Dendritic cell treated with granulocyte-macrophage colony-stimulating factor and Interleukin-4, amounts not matched to agents 40 ng/mL and 50 ng/mL, for 4 days (primary cell): ENCODE measurements at regions of chrX and their contacts with region 1.

Region 1: DNA sequence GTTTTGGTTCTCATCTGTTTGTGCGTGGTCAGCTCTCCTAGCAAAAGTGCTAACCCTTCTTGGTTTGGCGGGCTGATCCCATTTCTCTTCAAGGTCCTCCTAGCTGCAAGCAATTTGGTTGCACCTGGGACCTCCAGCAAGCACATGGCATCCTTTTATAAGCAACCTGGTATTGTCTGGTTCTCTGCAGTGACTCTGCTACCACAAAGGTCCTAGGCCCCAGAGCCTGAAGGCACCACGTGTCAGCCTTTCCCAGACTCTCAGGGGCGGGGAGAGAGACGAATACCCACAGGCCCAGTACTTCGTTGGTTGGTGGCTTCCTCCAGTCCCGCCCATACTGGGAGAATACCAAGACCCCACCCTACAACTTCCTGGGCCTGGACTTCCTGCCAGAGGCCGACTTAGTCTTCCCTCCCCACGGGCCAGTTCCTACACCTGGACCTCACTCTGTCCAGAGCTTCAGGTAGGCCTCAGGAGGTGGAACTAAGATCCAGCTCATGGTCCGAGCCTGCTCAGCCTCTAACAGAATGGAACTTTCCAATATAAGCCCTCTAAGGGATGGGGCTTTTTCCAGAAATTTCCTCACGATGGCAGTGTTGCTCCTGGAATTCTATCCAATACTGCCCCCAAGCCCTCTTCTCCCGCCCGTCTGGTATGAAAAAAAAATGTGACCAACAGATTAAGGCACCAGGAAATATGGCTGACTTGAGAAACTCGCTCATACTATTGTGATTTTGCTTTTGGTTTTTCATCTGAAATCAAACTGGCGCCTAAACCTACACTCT is 192.5 kb upstream of the STK26 start:
- H3K4me3 Mint-ChIP-seq: peak overlapping the region; percentile 77
- H3K27ac Mint-ChIP-seq: peak overlapping the region; percentile 87
- H3K4me1 Mint-ChIP-seq: peaks cover 12% of the 10 kb centered on the region
- H3K27me3 Mint-ChIP-seq: no peaks in the 10 kb centered on the region

Region 2: GRCh38 chrX:131874300-131874699 is 43.7 kb after region 1 on chrX:
- intact Hi-C with region 1: no loop called
- H3K4me3 Mint-ChIP-seq: no peak overlapping the region
- H3K27ac Mint-ChIP-seq: no peak overlapping the region
- H3K4me1 Mint-ChIP-seq: no peaks in the 10 kb centered on the region
- H3K27me3 Mint-ChIP-seq: no peaks in the 10 kb centered on the region

Region 3: DNA sequence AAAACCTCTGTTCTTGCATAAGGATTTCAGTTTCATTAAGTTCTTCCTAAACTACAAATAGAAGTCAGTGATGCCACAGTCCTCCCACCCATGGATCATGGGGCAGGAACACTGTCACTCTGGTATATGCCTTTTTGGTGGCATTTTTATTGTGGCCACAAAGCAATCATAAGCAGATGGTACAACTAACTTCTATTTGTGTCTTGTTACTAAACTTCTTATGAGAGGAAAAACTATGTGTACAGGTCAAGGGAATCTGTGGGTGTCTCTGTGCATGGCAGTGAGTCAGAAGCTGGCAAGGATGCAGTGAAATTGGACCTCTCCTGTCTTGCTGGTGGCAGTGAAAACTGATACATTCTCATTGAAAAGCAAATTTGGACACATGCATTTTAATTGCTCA is 1829.7 kb after region 1 on chrX:
- intact Hi-C with region 1: loop called (anchors 10 kb)
- H3K4me3 Mint-ChIP-seq: no peak overlapping the region
- H3K27ac Mint-ChIP-seq: no peak overlapping the region
- H3K4me1 Mint-ChIP-seq: no peaks in the 10 kb centered on the region
- H3K27me3 Mint-ChIP-seq: no peaks in the 10 kb centered on the region